Activated naive CD8-positive, alpha-beta T cell treated with anti-CD3 and anti-CD28 coated beads, Interleukin-2, amount 10 ng/mL, durations not matched to agents 7 days and 5 days (primary cell): ENCODE measurements at regions of chr12 and their contacts with region 1.

Region 1: GRCh38 chr12:120469450-120470149 is at the start of gene SRSF9:
- DNase-seq: peak; percentile 99
- ATAC-seq: peak; percentile 95
- H3K4me3 Mint-ChIP-seq: peak within 1 kb of the TSS; percentile 97
- H3K27ac Mint-ChIP-seq: peak within 1 kb of the TSS; percentile 86
- H3K4me1 Mint-ChIP-seq: peaks cover 28% of the 10 kb centered on the region
- H3K27me3 Mint-ChIP-seq: no peaks in the 10 kb centered on the region
- total RNA-seq, gene SRSF9: 164 to 166 TPM

Region 2: GRCh38 chr12:120453977-120454376 is 15.6 kb before region 1 on chr12:
- POLR2A ChIA-PET with region 1: interaction called, 14 read pairs
- DNase-seq: no peak
- ATAC-seq: peak; percentile 84
- H3K4me3 Mint-ChIP-seq: no peak overlapping the region
- H3K27ac Mint-ChIP-seq: no peak overlapping the region
- H3K4me1 Mint-ChIP-seq: peaks cover 4% of the 10 kb centered on the region
- H3K27me3 Mint-ChIP-seq: no peaks in the 10 kb centered on the region

Region 3: GRCh38 chr12:120495723-120496412 is 26.3 kb after region 1 on chr12 and contains the start of gene DYNLL1:
- POLR2A ChIA-PET with region 1: interaction called, 16 read pairs
- DNase-seq: peak; percentile 98
- ATAC-seq: peak; percentile 96
- H3K4me3 Mint-ChIP-seq: peak within 1 kb of the TSS; percentile 98
- H3K27ac Mint-ChIP-seq: peak within 1 kb of the TSS; percentile 84
- H3K4me1 Mint-ChIP-seq: peaks cover 28% of the 10 kb centered on the region
- H3K27me3 Mint-ChIP-seq: no peaks in the 10 kb centered on the region
- total RNA-seq, gene DYNLL1: 146 to 153 TPM